ENCODE measurements at regions of chr11 and their contacts with region 1.

Region 1: DNA sequence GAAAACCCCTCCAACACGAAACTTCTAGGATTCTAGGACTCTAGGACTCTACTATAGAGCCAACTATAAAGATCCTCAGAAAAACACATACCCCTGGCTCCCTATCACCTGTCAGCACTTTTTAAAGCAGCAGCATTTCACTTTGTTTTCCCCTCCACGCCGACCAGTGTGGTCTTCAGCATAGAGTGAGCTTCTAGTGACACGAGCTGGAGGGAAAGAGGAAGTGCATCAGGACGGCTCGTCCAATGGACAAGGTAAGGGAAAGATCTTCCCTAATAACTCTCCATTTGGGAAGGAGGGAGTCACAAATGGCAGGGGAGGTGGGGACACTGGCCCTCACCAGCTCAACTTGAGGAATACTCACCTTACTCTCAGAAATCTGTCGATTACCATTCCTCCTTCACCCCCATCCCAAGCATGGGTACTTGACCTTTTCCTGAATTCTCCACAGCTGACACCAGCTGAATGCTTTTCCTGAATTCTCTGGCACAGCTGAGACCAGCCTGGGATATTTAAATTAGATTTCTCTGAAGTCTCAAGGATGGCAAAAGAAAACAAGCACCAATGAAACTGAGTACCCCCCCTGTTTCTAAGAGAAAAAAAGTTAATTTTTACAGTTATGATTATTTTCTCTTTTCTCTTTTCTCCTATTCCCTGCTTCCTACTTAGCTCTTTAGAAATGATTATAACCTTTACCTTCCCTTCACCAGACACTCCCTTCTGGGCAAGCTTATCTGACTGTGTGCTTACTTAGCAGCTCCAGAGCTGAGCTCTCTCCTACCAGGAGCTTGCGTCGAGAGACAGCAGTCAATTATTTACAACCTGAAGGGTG is 33.3 kb upstream of the NNMT start:
- DNase-seq: peak; percentile 26 to 50
- ATAC-seq: peak; percentile 85 to 90; a peak in 5 of 6 replicates
- H3K4me3 ChIP-seq: no peak overlapping the region
- H3K27ac ChIP-seq: no peak overlapping the region
- H3K4me1 ChIP-seq: 0 out of 3 replicates have a peak, but pooled peaks cover 5% of the 10 kb centered on the region
- CTCF ChIP-seq: peak; percentile 55; the same call in 2 of the 3 replicates
- EP300 ChIP-seq: no peak
- POLR2A ChIP-seq: no peak
- RAD21 ChIP-seq: peak; percentile 70 to 76

Region 2: DNA sequence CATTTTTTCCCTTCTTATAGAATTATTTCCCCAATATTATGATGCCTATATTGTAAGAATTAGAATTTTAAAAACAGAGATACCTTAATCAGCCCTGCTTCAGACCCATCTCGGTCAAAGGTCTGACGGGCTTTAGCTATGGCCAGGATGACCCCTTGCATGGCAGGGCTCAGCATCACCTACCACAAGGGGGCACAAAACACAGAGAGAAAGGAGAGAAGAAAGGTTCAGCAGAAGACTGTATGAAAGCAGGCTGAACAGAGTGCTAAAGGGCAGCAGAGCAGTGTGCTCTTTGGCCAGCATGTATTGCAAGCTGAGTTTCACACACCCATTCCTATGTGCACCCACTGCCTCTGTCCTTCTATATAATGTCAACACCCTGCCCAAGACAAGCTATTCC is 456.5 kb before region 1 on chr11:
- CTCF ChIA-PET with region 1: interaction called, 27 read pairs
- POLR2A ChIA-PET with region 1: no interaction called
- DNase-seq: peak; percentile 4 to 35
- ATAC-seq: peak; percentile 88 to 94
- H3K4me3 ChIP-seq: no peak overlapping the region
- H3K27ac ChIP-seq: no peak overlapping the region
- H3K4me1 ChIP-seq: no peaks in the 10 kb centered on the region
- CTCF ChIP-seq: peak; percentile 31
- EP300 ChIP-seq: no peak
- POLR2A ChIP-seq: no peak
- RAD21 ChIP-seq: peak in 1 of 2 experiments; percentile 29; a peak in 1 of 5 replicates

Region 3: DNA sequence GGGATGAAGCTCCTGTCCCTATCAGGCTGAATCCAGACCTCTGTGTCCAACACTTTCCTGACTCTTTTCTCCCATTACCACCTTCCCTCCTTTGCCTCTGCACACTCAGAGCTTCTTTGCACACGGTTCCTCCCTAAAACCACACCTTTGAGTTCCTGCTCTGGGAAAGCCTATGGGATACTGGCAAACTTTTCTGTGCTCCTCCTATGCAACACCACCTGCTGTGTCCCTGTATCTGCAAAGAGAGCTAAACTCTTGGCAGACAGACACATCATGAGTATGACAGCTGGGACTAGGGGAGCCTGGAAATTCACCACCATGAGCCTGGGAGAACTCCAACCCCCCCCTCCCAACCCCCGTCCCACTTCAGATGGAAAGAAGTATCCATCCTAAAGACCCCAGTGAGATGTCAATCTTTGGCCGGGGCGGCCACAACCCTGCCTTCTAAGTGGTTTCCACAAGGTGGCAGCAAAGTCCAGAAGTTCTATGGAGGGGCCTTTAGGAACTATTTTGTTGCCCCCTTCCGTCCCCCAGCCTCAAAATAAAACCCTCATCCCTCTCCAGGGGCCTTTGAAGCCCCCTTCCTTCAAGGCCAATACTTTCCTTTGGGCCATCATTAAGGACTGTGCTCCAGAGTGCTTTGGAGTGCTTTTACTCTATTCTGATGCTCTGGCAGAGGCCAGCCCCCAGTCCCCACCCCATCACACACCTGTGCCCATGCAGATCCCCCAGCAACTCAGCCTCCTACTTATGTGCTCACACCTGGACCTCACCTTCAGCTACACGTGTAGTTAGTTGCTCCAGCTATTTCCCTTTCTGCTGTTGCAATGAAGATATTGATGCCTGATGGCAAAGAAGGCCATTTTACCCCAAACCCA is 268.6 kb before region 1 on chr11:
- CTCF ChIA-PET with region 1: interaction called, 315 read pairs
- POLR2A ChIA-PET with region 1: no interaction called
- DNase-seq: peak in 1 of 2 experiments; percentile 37
- ATAC-seq: peak in 1 of 2 experiments; percentile 72; a peak in 3 of 6 replicates
- H3K4me3 ChIP-seq: no peak overlapping the region
- H3K27ac ChIP-seq: no peak overlapping the region
- H3K4me1 ChIP-seq: no peaks in the 10 kb centered on the region
- CTCF ChIP-seq: peak; percentile 64
- EP300 ChIP-seq: no peak
- POLR2A ChIP-seq: no peak
- RAD21 ChIP-seq: peak; percentile 68 to 81

Region 4: DNA sequence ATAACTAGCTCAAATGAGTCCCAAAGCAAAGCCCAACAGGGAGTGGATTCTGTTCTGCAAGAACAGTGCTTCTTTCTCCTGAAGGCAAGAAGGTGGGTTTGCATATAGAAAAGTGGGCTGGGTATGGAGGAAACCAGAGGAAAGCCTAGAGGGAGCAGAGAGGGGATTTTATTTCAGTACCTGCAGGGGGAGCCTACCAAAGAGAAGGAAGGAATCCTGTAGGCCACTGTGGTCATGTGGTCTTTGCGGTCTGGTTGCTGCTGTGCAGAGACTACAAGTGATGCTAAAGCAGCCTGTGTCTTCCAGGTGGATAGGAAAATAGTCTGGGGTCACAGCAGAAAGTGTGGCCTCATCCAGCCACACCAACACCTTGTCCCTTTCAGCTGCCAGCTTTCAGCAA is 236.5 kb before region 1 on chr11:
- CTCF ChIA-PET with region 1: interaction called, 103 read pairs
- POLR2A ChIA-PET with region 1: no interaction called
- DNase-seq: peak in 1 of 2 experiments; percentile 18
- ATAC-seq: peak; percentile 44 to 76; a peak in 4 of 6 replicates
- H3K4me3 ChIP-seq: no peak overlapping the region
- H3K27ac ChIP-seq: no peak overlapping the region
- H3K4me1 ChIP-seq: no peaks in the 10 kb centered on the region
- CTCF ChIP-seq: no peak
- EP300 ChIP-seq: no peak
- POLR2A ChIP-seq: no peak
- RAD21 ChIP-seq: no peak

Region 5: DNA sequence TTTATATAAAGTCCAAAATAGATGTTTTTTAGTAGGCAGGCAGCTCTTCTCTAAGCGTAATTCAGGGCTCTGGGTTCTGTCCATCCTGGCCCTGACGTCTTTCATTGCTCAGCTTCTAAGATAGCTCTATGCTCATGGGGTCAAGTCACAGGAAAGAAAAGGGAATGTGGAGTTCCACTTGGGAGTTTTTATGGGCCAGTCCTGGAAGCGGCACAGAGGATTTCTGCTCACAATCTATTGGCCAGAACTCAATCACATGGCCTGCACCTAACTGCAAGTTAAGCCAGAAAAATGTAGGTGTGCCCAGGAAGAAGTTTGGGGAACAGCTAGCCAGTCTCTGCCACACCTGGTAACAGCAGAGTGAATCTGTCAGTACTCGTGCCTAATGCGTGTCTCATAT is 210.7 kb before region 1 on chr11:
- CTCF ChIA-PET with region 1: interaction called, 15 read pairs
- POLR2A ChIA-PET with region 1: no interaction called
- DNase-seq: no peak
- ATAC-seq: no peak
- H3K4me3 ChIP-seq: no peak overlapping the region
- H3K27ac ChIP-seq: no peak overlapping the region
- H3K4me1 ChIP-seq: no peaks in the 10 kb centered on the region
- CTCF ChIP-seq: no peak
- EP300 ChIP-seq: no peak
- POLR2A ChIP-seq: no peak
- RAD21 ChIP-seq: no peak

Region 6: DNA sequence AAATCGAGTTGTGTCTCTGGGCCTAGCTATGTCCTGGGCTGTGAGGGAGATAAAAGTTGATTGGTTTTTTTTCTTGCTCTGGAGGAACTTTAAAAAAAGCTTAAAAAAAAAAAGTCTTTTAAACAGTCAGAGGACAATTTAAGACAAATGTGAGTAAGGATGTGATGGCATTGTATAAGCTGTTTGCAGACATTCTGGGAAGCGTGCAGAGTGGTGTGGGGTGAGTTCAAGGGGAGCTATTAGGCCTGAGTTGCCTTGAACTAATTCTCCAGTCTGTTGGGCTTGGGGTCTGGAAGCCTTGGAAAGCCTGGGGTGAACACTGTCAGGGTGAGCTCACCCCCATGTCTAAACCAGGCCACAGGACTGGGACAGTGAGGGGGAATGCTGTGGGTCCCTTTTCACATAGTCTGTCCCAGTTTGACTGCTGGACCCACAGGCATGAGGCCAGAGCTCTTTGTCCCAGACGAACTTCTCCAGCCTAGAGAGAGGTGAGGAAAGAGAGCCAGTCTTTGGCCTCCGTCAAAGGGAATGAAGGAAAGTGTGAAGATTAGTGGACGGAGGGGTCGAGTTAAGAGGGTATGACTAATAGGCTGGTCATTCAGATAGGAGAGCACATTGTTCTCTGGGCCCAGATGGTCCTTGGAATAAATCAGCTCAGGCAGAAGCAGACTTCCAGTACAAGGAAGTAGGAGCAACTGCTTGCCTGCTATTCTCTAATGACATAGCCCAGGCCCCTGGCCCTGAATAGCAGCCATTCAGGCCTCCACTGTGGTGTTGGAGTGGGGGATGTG is 43.1 kb before region 1 on chr11:
- CTCF ChIA-PET with region 1: interaction called, 11 read pairs
- POLR2A ChIA-PET with region 1: no interaction called
- DNase-seq: no peak
- ATAC-seq: no peak
- H3K4me3 ChIP-seq: no peak overlapping the region
- H3K27ac ChIP-seq: no peak overlapping the region
- H3K4me1 ChIP-seq: no peaks in the 10 kb centered on the region
- CTCF ChIP-seq: no peak
- EP300 ChIP-seq: no peak
- POLR2A ChIP-seq: no peak
- RAD21 ChIP-seq: no peak

Region 7: DNA sequence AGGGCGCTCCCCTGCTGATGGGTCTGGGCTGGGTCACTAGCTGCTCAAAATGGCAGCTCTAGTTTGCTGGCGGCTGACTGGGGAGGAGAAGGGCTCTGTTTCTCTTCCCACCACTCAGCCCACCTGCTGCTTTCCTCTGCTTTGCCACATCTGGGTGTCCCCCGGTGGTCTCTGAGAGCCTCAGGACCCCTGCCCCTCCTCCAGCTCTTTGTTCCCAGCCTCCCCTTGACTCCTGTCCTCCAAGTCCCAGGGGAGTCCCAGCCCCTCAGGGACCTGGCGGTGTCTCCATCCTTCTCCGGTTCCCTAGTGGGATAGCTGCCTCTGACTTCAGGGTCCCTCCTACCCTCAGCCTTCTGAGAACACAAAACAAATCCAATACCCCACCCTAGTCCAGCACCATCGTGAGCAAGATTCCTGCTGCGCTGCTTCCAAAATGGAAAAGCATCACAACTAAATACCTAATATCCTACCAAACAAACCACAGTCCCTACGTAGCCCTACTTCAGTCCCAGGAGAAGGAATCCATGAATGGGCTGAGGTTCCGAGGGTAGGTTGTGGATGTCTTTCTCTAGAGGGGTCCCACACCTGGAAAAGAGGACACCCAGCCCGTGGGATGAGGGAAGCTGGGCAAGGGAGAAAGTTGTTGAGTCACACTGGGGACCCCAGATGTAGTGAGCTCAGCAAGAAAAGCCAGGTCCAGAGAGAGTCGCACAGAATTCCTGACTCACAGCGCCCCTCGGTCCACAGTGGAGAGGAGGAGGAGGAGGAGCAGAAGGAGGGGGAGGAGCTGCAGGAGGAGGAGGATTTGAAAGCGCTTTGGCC is 11.7 kb before region 1 on chr11:
- CTCF ChIA-PET with region 1: interaction called, 56 read pairs
- POLR2A ChIA-PET with region 1: no interaction called
- DNase-seq: no peak
- ATAC-seq: no peak
- H3K4me3 ChIP-seq: no peak overlapping the region
- H3K27ac ChIP-seq: no peak overlapping the region
- H3K4me1 ChIP-seq: no peaks in the 10 kb centered on the region
- CTCF ChIP-seq: no peak
- EP300 ChIP-seq: no peak
- POLR2A ChIP-seq: no peak
- RAD21 ChIP-seq: no peak

Region 8: GRCh38 chr11:114377612-114378267 is 114.8 kb after region 1 on chr11:
- CTCF ChIA-PET with region 1: no interaction called
- POLR2A ChIA-PET with region 1: no interaction called
- DNase-seq: no peak
- ATAC-seq: no peak
- H3K4me3 ChIP-seq: no peak overlapping the region
- H3K27ac ChIP-seq: no peak overlapping the region
- H3K4me1 ChIP-seq: no peaks in the 10 kb centered on the region
- CTCF ChIP-seq: no peak
- EP300 ChIP-seq: no peak
- POLR2A ChIP-seq: no peak
- RAD21 ChIP-seq: no peak